ENCODE measurements at regions of chr13 and their contacts with region 1.

Region 1: GRCh38 chr13:44364348-44365049 is 9.1 kb upstream of the SERP2 start:
- DNase-seq: no peak
- ATAC-seq: peak; percentile 27
- H3K4me3 ChIP-seq: no peak overlapping the region
- H3K4me1 ChIP-seq: peaks cover 42% of the 10 kb centered on the region
- CTCF ChIP-seq: no peak

Region 2: GRCh38 chr13:44312898-44313551 is 51.5 kb before region 1 on chr13:
- intact Hi-C with region 1: loop called in 1 of 2 experiments (anchors 10 kb)
- DNase-seq: peak in 1 of 3 donors; percentile 30
- ATAC-seq: peak; percentile 75
- H3K4me3 ChIP-seq: no peak overlapping the region
- H3K4me1 ChIP-seq: peaks cover 27% of the 10 kb centered on the region
- CTCF ChIP-seq: no peak

Measured in mucosa of descending colon (tissue), 3 donors.